ENCODE measurements at regions of chr12 and their contacts with region 1.

Region 1: DNA sequence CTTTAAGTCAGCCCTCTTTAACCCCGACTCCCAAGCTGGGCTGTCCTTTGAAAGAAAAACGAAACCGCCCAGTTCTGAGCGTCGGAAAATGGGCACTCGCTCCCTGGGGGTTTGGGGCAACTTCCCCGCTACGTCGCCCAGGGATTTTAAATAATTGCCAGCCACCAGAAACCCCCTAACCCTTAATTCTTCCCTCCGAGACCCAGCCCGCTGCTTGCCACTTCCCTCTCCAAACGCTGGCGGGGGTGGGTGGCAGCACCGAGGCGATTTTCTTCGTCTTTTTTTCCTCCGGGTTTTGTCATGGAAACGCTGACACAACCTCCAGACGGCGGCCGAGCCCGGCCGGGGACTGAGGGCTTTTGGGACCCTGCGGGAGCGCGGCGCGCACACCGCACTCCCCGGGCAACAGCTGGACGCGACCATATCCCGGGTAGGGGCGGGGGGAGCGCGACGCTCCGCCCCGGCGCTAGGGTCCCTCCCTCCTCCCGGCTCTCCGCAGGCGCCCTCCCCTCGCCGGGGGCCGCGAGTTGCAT is at the start of gene CHST11:
- DNase-seq: peak; percentile 71
- ATAC-seq: peak; percentile 70
- H3K4me3 Mint-ChIP-seq: peak within 1 kb of the TSS; percentile 99
- H3K27ac Mint-ChIP-seq: peak within 1 kb of the TSS; percentile 93
- H3K4me1 Mint-ChIP-seq: peaks cover 49% of the 10 kb centered on the region
- H3K27me3 Mint-ChIP-seq: no peaks in the 10 kb centered on the region
- CTCF ChIP-seq: no peak
- total RNA-seq, gene CHST11: 40.1 and 40.6 TPM in 2 replicates

Region 2: GRCh38 chr12:104286538-104287482 is 169.7 kb before region 1 on chr12:
- CTCF ChIA-PET with region 1: no interaction called
- POLR2A ChIA-PET with region 1: no interaction called
- intact Hi-C with region 1: loop called (anchors 5 kb)
- DNase-seq: peak; percentile 76
- ATAC-seq: peak; percentile 86
- H3K4me3 Mint-ChIP-seq: peak overlapping the region; percentile 100
- H3K27ac Mint-ChIP-seq: peak overlapping the region; percentile 99
- H3K4me1 Mint-ChIP-seq: peaks cover 40% of the 10 kb centered on the region
- H3K27me3 Mint-ChIP-seq: peaks cover 2% of the 10 kb centered on the region
- CTCF ChIP-seq: no peak

Region 3: GRCh38 chr12:104443008-104443407 is 13.5 kb before region 1 on chr12:
- CTCF ChIA-PET with region 1: no interaction called
- POLR2A ChIA-PET with region 1: no interaction called
- intact Hi-C with region 1: no loop called
- DNase-seq: no peak
- ATAC-seq: no peak
- H3K4me3 Mint-ChIP-seq: no peak overlapping the region
- H3K27ac Mint-ChIP-seq: no peak overlapping the region
- H3K4me1 Mint-ChIP-seq: peaks cover 9% of the 10 kb centered on the region
- H3K27me3 Mint-ChIP-seq: no peaks in the 10 kb centered on the region
- CTCF ChIP-seq: no peak

Region 4: DNA sequence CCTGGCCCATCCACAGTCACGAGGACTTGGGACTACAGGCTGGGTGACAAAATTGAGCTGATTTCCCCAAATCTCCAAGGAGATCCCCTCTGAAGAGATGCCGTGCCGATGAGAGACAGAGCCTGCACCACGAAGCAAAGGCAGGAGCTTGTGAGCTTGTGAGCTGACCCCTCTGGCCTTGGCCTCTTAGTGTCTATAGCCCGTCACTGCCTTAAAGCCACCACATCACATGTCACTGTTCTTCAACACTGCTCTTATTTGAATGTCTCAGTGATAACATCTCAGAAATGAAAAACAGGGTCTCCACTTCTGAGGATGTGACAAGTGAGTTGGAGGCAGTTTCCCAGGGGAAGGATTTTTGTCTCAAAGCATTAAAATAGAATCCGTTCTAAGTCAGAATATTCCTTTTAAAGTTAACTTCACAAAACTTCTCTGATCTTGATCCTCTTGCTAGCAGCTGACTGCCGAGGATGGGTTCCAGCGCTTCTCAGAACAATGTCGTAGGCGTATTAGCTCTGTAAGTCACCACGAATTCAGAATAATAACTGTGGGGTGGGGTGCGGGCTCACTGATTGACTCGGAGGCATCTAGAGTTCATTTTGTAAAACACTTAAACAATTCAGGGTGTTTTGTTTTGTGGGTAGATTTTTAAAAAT is 37.8 kb after region 1 on chr12:
- CTCF ChIA-PET with region 1: no interaction called
- POLR2A ChIA-PET with region 1: interaction called, 4 read pairs
- intact Hi-C with region 1: loop called (anchors 1 kb)
- DNase-seq: no peak
- ATAC-seq: no peak
- H3K4me3 Mint-ChIP-seq: peak overlapping the region; percentile 45
- H3K27ac Mint-ChIP-seq: peak overlapping the region; percentile 22
- H3K4me1 Mint-ChIP-seq: peaks cover 83% of the 10 kb centered on the region
- H3K27me3 Mint-ChIP-seq: no peaks in the 10 kb centered on the region
- CTCF ChIP-seq: no peak

Region 5: GRCh38 chr12:104536841-104537240 is 80.4 kb after region 1 on chr12:
- CTCF ChIA-PET with region 1: interaction called, 3 read pairs
- POLR2A ChIA-PET with region 1: interaction called, 10 read pairs
- intact Hi-C with region 1: no loop called
- DNase-seq: no peak
- ATAC-seq: peak; percentile 82
- H3K4me3 Mint-ChIP-seq: no peak overlapping the region
- H3K27ac Mint-ChIP-seq: no peak overlapping the region
- H3K4me1 Mint-ChIP-seq: peaks cover 89% of the 10 kb centered on the region
- H3K27me3 Mint-ChIP-seq: no peaks in the 10 kb centered on the region
- CTCF ChIP-seq: no peak

Region 6: DNA sequence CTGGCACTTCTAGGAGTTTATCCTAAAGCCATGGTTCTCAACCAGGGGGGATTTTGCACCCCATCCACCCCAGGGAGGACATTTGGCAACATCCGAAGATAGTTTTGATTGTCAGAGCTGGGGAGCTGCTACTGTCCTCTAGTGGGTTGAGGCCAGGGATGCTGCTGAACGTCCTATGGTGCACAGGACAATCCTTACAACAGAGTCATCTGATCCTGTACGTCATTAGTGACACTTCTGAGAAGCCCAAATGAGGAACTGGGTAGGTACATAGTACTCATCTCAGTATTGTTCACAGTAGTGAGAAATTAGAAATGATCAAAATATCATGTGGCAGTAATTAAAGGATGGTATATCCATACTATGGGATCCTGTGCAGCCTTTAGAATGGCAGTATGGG is 185.4 kb after region 1 on chr12:
- CTCF ChIA-PET with region 1: interaction called, 9 read pairs
- POLR2A ChIA-PET with region 1: interaction called, 69 read pairs
- intact Hi-C with region 1: loop called (anchors 1 kb)
- DNase-seq: peak; percentile 44
- ATAC-seq: peak; percentile 86
- H3K4me3 Mint-ChIP-seq: peak overlapping the region; percentile 55
- H3K27ac Mint-ChIP-seq: peak overlapping the region; percentile 95
- H3K4me1 Mint-ChIP-seq: peaks cover 83% of the 10 kb centered on the region
- H3K27me3 Mint-ChIP-seq: no peaks in the 10 kb centered on the region
- CTCF ChIP-seq: no peak

Region 7: DNA sequence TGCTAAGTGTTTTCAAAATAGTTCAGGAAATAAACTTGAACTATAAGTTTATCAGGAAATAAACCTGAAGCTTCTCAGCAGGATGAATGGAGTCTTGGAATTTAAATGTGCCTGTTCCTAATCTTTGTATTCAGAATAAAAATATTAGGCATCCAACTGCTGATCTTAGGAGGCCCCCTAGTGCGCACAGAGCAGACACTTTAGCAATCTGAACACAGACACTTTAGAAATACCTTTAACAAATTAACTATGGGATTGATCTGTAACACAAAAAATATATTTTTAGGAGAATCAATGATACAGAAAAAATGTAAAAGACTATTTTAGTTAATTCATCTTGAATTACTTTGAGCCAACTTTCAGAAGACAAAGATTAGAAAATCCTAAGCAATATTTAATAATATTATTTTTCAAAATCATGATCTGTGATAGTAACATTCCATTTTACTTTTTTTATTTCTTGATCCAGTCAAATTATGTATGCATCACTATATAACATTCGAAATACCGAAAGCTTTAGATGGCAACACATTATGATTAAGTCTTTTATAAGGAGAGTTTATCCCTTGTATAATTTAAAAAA is 420.7 kb after region 1 on chr12:
- CTCF ChIA-PET with region 1: no interaction called
- POLR2A ChIA-PET with region 1: no interaction called
- intact Hi-C with region 1: loop called (anchors 1 kb)
- DNase-seq: no peak
- ATAC-seq: no peak
- H3K4me3 Mint-ChIP-seq: no peak overlapping the region
- H3K27ac Mint-ChIP-seq: no peak overlapping the region
- H3K4me1 Mint-ChIP-seq: no peaks in the 10 kb centered on the region
- H3K27me3 Mint-ChIP-seq: peaks cover 3% of the 10 kb centered on the region
- CTCF ChIP-seq: no peak

Region 8: DNA sequence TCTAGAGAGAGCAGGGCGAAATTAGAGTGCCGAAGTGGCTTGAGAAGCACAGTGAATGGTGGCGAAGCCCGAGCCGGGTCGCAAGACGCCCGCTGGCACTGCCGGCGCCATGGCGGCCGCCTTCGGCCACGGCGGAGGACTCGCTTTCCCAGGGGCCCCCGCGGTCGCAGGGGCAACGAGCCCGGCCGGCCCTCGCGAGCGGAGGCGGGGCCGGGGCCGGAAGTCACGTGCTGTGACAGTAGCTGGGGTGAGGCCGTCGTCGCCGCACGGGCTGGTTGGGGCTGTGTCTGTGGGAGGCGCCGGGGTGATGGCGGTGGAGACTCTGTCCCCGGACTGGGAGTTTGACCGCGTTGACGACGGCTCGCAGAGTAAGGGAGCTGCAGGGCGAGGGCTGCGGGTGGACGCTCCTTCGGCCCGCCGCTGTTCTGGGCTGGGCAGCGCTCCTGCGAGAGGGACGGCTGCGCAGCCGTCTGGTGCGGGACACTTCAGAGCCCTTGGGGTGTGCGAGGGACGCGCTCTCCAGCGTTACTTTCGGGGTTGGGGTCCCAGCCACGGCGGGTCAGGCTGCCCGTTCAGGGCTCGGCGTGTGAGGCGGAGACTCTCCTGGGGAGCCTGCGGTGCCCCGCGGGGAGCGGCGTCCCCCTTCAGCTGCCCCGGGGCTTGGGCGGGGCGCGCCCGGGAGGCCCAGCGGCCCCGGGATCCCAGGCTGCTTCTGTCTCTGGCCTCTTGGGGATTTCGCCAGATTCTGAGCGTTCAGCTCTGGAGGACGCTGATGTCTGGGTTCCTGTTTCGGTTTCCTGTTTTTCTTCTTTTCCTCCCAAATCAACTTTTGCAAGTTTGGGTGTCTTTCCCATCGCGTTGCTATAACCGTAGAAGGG is 651.2 kb after region 1 on chr12 and contains the start of gene WASHC4:
- CTCF ChIA-PET with region 1: no interaction called
- POLR2A ChIA-PET with region 1: no interaction called
- intact Hi-C with region 1: loop called (anchors 1 kb)
- DNase-seq: peak; percentile 95
- ATAC-seq: peak; percentile 89
- H3K4me3 Mint-ChIP-seq: peak within 1 kb of the TSS; percentile 96
- H3K27ac Mint-ChIP-seq: peak within 1 kb of the TSS; percentile 96
- H3K4me1 Mint-ChIP-seq: peaks cover 33% of the 10 kb centered on the region
- H3K27me3 Mint-ChIP-seq: no peaks in the 10 kb centered on the region
- CTCF ChIP-seq: no peak
- total RNA-seq, gene WASHC4: 105 and 128 TPM in 2 replicates